ENCODE measurements at regions of chr10 and their contacts with region 1.

Region 1: DNA sequence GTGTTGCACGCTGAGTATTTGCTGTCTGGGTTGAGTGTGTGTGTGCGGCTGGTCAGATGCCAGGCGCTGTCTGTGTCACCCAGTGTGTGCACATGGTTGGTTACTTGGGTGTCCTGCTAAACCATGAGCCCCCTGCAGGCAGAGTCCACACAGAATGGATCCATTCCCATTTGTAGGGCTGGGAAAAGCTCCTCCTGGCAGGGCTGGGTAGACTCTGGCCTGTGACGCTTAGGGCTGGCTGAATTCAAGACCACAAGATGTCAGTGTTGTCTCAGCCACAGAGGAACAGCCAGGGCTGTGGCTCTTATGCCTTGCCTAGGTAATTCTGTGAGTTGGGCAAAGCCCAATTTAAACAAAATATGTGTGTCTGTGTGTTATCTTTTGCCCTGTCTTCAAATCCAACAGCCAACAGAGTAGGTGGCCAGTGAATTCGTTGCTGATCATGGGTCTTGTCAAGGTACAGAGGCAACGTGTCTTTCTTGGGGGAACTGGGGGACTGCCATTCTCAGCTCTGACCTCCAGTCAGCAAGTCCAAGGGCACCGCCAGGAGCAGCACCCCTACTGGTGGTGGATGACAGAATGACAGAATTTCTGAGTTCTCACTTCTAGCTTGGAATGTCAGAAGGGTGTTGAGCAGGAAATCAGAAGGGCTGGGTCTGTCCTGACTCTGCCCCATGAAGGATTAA is 285.1 kb downstream of the CCSER2 start:
- DNase-seq: peak; percentile 64 to 75
- H3K4me3 ChIP-seq: peak overlapping the region in 2 of 4 experiments; percentile 5 to 37; a peak in 2 of 8 replicates
- H3K27ac ChIP-seq: no peak overlapping the region
- H3K4me1 ChIP-seq: peaks cover 0 to 6% (median 3%) of the 10 kb centered on the region in 4 experiments; a peak in 4 of 7 replicates
- H3K27me3 ChIP-seq: no peaks in the 10 kb centered on the region; a peak in 1 of 7 replicates
- CTCF ChIP-seq: peak; percentile 67 to 87 (median 76)
- EP300 ChIP-seq: no peak
- POLR2A ChIP-seq: no peak
- RAD21 ChIP-seq: peak; percentile 90 to 91

Region 2: GRCh38 chr10:84511106-84511505 is 102.4 kb before region 1 on chr10:
- CTCF ChIA-PET with region 1: no interaction called
- POLR2A ChIA-PET with region 1: no interaction called
- DNase-seq: no peak
- H3K4me3 ChIP-seq: no peak overlapping the region
- H3K27ac ChIP-seq: no peak overlapping the region
- H3K4me1 ChIP-seq: peaks cover 0 to 3% (median 0%) of the 10 kb centered on the region in 4 experiments; a peak in 1 of 7 replicates
- H3K27me3 ChIP-seq: no peaks in the 10 kb centered on the region
- CTCF ChIP-seq: no peak
- EP300 ChIP-seq: no peak
- POLR2A ChIP-seq: no peak
- RAD21 ChIP-seq: no peak

Region 3: DNA sequence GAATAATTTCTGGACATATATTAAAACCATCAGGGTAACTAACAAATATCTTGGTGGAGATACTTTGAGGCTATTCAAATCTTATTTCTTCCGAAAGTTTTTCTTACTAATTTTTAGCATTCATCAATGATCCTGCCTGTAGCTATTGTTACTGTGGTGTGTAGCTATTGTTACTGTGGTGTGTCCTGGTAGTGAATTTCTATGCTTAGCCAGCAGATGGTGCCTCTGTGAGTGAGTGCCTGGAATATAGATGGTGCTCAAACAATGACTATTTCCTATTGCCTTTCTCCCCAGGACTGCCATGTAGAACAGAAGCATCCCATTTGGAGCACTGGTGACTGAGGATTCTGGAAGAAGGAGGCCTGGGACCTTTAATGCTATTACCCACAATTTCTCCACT is 39.4 kb before region 1 on chr10:
- CTCF ChIA-PET with region 1: interaction called, 15 read pairs
- POLR2A ChIA-PET with region 1: no interaction called
- DNase-seq: no peak
- H3K4me3 ChIP-seq: no peak overlapping the region
- H3K27ac ChIP-seq: no peak overlapping the region
- H3K4me1 ChIP-seq: no peaks in the 10 kb centered on the region; a peak in 1 of 7 replicates
- H3K27me3 ChIP-seq: no peaks in the 10 kb centered on the region
- CTCF ChIP-seq: peak in 2 of 3 experiments; percentile 49 to 60; a peak in 3 of 4 replicates
- EP300 ChIP-seq: no peak
- POLR2A ChIP-seq: no peak
- RAD21 ChIP-seq: peak; percentile 38 to 46

Region 4: GRCh38 chr10:84626397-84627087 is 13.1 kb after region 1 on chr10:
- CTCF ChIA-PET with region 1: interaction called, 38 read pairs
- POLR2A ChIA-PET with region 1: no interaction called
- DNase-seq: no peak
- H3K4me3 ChIP-seq: no peak overlapping the region
- H3K27ac ChIP-seq: no peak overlapping the region
- H3K4me1 ChIP-seq: no peaks in the 10 kb centered on the region
- H3K27me3 ChIP-seq: no peaks in the 10 kb centered on the region
- CTCF ChIP-seq: no peak
- EP300 ChIP-seq: no peak
- POLR2A ChIP-seq: no peak
- RAD21 ChIP-seq: no peak

Region 5: GRCh38 chr10:84665883-84666463 is 52.5 kb after region 1 on chr10:
- CTCF ChIA-PET with region 1: interaction called, 39 read pairs
- POLR2A ChIA-PET with region 1: no interaction called
- DNase-seq: peak; percentile 61 to 89
- H3K4me3 ChIP-seq: 0 out of 8 replicates have a peak overlapping the region, but pooled peaks of 1 of the 4 experiments have one; percentile 8
- H3K27ac ChIP-seq: no peak overlapping the region
- H3K4me1 ChIP-seq: peaks cover 0 to 4% (median 0%) of the 10 kb centered on the region in 4 experiments; a peak in 1 of 7 replicates
- H3K27me3 ChIP-seq: no peaks in the 10 kb centered on the region; a peak in 1 of 7 replicates
- CTCF ChIP-seq: peak; percentile 83 to 93 (median 93)
- EP300 ChIP-seq: peak in 1 of 2 experiments; percentile 29; a peak in 1 of 3 replicates
- POLR2A ChIP-seq: no peak
- RAD21 ChIP-seq: peak; percentile 80 to 81

Region 6: GRCh38 chr10:84715911-84716310 is 102.4 kb after region 1 on chr10:
- CTCF ChIA-PET with region 1: interaction called, 24 read pairs
- POLR2A ChIA-PET with region 1: no interaction called
- DNase-seq: peak; percentile 34 to 76
- H3K4me3 ChIP-seq: no peak overlapping the region
- H3K27ac ChIP-seq: no peak overlapping the region
- H3K4me1 ChIP-seq: no peaks in the 10 kb centered on the region
- H3K27me3 ChIP-seq: no peaks in the 10 kb centered on the region
- CTCF ChIP-seq: peak; percentile 93 to 100 (median 99)
- EP300 ChIP-seq: no peak
- POLR2A ChIP-seq: no peak
- RAD21 ChIP-seq: peak; percentile 77 to 78

Measured in H1 (cell line).